IMR-90 (cell line): ENCODE measurements at regions of chr6 and their contacts with region 1.

Region 1: DNA sequence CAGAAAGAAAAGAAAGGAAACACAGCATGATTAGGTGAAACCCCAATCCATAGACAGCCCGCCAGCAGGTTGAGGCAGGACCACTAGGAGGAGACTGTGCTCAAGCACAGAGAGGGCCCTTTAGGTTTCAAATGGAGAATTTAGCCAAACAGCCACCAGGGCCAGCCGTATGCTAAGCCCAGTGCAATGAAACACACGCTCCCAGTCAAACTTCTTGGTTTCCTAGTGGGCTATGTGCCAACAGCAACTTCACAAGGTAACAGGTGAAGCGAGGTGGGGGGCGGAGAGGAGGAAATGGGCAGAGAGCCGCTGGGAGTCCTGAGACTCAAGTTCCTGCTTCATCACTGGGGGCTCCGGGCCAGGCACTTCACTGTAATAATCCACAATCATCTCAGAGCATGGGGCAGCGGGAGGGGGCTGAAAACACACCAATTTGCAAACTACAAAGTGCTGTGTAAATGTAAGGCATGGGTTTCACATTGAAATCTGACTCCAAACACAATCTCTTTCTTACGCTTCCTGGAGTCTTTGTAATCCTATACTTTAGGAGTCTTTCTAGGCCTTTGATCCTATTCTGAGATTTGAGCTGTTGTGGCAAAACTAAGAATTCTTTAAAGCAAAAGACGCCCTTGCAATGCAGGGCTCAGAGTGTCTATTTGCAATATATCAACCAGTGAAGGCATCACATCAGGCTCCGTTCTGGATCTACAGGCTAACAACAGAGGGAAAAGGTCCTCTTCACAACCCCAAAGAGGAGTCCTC is 117.3 kb downstream of the OPRM1 start:
- DNase-seq: peak; percentile 45
- ATAC-seq: peak; percentile 78
- H3K4me3 ChIP-seq: no peak overlapping the region
- H3K27ac ChIP-seq: no peak overlapping the region
- H3K4me1 ChIP-seq: peaks cover 3% of the 10 kb centered on the region; the same call in 1 of the 2 replicates
- H3K27me3 ChIP-seq: no peaks in the 10 kb centered on the region; the same call in 1 of the 2 replicates
- CTCF ChIP-seq: peak; percentile 73
- POLR2A ChIP-seq: no peak
- RAD21 ChIP-seq: peak; percentile 76

Region 2: DNA sequence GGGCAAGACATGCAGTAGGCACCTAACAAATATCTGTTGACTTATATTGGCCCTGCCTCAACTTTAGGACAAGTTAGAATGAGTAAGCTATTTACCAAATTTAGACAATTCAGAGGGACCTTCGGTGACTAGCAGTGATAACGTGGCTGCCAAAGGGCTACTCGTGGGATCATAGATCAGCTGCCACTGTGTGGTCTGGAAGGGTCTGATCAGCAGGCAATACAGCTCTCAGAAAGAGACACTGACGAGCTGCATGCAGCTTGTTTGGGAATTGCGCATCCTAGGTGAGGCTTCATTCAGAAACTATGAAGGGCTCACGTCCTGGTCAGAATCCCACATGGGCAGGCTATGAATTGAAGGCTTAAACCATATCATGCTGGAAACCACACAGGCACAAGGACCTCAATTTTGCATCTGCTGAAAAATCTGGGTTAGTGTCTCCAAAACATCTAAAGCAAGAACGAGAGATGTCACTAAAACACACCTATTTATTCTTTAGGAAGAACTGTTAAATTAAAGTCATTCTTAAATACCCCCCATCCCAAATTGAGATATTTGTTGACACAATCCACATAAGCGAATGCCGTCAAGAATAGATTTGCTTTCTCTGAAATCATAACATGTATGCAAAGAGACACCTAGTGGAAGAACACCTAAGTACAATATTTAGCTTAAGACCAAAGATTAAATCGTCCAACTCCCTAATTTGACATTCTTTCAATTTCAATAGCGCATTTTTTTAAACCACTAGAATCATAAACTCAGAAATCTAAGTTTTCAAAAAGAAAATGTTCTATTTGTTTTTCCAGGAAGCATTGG is 120.7 kb after region 1 on chr6:
- CTCF ChIA-PET with region 1: interaction called, 12 read pairs
- POLR2A ChIA-PET with region 1: no interaction called
- dilution Hi-C with region 1: no loop called
- in situ Hi-C with region 1: no loop called
- intact Hi-C with region 1: loop called (anchors 1 kb)
- DNase-seq: peak; percentile 50
- ATAC-seq: peak; percentile 85
- H3K4me3 ChIP-seq: no peak overlapping the region
- H3K27ac ChIP-seq: no peak overlapping the region
- H3K4me1 ChIP-seq: peaks cover 3% of the 10 kb centered on the region
- H3K27me3 ChIP-seq: no peaks in the 10 kb centered on the region
- CTCF ChIP-seq: peak; percentile 55
- POLR2A ChIP-seq: no peak
- RAD21 ChIP-seq: peak; percentile 54

Region 3: DNA sequence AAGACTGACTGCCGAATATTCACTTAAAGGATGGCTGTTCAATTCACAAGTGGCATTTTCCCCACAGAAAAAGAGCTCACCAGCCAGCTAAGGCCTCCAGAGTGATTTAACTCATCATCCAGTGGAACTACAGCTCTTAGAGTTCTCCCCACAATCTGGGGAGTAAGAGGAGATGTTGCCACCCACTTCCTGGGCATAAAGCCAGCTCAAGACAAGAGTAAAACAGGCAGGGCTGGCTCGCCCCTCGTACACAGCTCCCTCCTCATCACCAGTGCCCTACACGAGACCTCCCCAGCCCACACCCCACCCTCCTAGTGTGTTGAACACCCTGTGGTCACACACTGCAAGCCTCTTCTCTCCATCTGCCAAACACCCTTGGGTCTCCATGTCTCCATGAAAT is 247.5 kb after region 1 on chr6:
- CTCF ChIA-PET with region 1: interaction called, 4 read pairs
- POLR2A ChIA-PET with region 1: no interaction called
- dilution Hi-C with region 1: no loop called
- in situ Hi-C with region 1: no loop called
- intact Hi-C with region 1: loop called (anchors 1 kb)
- DNase-seq: peak; percentile 82
- ATAC-seq: peak; percentile 65
- H3K4me3 ChIP-seq: no peak overlapping the region
- H3K27ac ChIP-seq: peak overlapping the region; percentile 88
- H3K4me1 ChIP-seq: peaks cover 22% of the 10 kb centered on the region
- H3K27me3 ChIP-seq: no peaks in the 10 kb centered on the region
- CTCF ChIP-seq: no peak
- POLR2A ChIP-seq: no peak
- RAD21 ChIP-seq: no peak

Region 4: DNA sequence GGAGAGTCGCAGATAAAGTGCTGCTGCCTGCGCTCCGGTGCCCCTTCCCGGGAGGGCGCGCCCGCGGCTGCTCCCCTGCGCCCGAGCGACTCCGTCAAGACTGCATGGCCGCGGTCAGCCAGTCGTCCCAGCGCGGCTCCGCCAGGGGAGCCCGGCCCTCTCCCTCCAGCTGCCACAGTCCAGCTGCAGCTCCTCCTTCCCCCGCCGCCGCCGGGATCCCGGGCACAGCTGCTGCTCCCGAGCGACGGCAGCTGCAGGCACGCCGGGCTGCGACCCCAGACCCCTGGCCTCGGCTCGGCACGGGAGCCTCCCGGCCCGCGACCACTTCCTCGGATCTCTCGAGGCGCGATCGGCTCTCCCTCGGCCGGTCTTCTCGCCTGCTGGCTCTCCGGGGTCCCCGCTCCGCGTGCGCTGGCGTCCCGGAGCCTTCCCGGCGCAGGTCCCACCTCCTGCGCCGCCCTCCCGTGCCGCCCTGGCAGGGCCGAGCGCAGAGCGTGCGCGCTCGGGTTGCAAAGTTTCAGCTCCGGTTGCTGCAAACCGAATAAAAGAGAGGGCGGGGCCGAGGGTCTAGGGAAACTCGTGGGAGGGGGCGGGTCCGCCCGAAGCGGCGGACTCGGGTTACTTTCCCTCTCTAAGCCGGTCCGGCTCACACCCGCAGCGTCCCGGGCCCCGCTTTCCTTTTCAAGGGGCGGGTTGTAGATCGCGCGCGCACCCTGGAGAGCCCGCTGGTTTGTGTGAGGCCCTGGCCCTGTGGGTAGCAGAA is 354.0 kb after region 1 on chr6 and contains the start of gene CNKSR3:
- CTCF ChIA-PET with region 1: no interaction called
- POLR2A ChIA-PET with region 1: no interaction called
- dilution Hi-C with region 1: no loop called
- in situ Hi-C with region 1: no loop called
- intact Hi-C with region 1: loop called (anchors 2 kb)
- DNase-seq: peak; percentile 95
- ATAC-seq: peak; percentile 89
- H3K4me3 ChIP-seq: peak within 1 kb of the TSS; percentile 88
- H3K27ac ChIP-seq: peak within 1 kb of the TSS; percentile 89
- H3K4me1 ChIP-seq: peaks cover 5% of the 10 kb centered on the region
- H3K27me3 ChIP-seq: no peaks in the 10 kb centered on the region
- CTCF ChIP-seq: peak; percentile 13; the same call in 1 of the 2 replicates
- POLR2A ChIP-seq: peak; percentile 58
- RAD21 ChIP-seq: 0 out of 2 replicates have a peak, but pooled peaks have one; percentile 27
- total RNA-seq, gene CNKSR3: 15.0 and 15.8 TPM in 2 replicates

Region 5: DNA sequence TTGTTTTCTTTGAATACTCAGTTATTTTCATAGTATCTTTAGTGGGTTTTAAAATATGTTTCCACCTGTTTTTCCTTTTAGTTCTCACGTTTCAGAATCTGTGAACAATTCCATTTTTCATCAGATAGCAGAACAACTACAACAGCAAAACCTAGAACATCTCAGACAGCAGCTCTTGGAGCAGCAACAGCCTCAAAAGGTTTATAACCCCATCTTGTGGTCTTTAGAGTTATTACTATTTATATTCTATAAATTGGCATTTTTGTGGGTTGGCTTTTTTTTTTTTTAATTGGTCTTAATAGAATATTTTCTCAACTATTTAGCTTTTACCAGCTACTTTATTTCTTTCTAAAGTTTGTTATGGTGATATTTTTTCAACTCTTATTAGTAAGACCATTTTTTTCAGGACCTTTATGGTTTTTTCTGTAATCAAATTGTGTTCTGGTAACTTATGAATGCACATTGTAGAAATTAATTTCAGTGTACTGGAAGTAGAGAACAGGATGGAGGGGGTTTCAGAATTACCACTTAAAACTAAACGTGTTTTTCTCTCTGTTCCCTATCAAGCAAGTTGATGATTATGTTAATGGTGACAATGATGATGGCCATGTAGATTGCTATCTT is 649.1 kb after region 1 on chr6:
- CTCF ChIA-PET with region 1: no interaction called
- POLR2A ChIA-PET with region 1: no interaction called
- dilution Hi-C with region 1: no loop called
- in situ Hi-C with region 1: loop called (anchors 10 kb)
- intact Hi-C with region 1: loop called (anchors 5 kb)
- DNase-seq: peak; percentile 70
- ATAC-seq: peak; percentile 80
- H3K4me3 ChIP-seq: no peak overlapping the region
- H3K27ac ChIP-seq: no peak overlapping the region
- H3K4me1 ChIP-seq: no peaks in the 10 kb centered on the region
- H3K27me3 ChIP-seq: no peaks in the 10 kb centered on the region
- CTCF ChIP-seq: peak; percentile 69
- POLR2A ChIP-seq: no peak
- RAD21 ChIP-seq: peak; percentile 73

Region 6: DNA sequence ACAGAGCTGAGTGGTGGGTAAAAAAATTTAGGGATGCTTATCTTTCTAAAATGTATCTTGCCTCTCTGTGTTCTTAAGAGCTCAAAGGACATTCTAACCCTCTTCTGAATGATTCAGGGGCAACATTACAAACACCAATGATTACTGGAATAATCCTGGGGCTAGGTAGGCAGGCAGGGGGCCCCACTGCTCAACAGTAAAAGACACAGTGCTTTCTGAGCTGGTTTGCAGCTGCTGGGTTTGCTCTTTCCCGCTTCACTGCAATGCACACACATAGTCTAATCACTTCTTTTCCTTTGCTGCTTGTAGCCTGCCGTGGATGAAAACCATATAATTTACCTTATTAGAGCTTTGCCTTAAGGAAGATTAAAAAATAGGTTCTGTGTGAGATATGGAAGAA is 1131.4 kb after region 1 on chr6:
- CTCF ChIA-PET with region 1: no interaction called
- POLR2A ChIA-PET with region 1: no interaction called
- dilution Hi-C with region 1: no loop called
- in situ Hi-C with region 1: no loop called
- intact Hi-C with region 1: no loop called
- DNase-seq: no peak
- ATAC-seq: no peak
- H3K4me3 ChIP-seq: no peak overlapping the region
- H3K27ac ChIP-seq: no peak overlapping the region
- H3K4me1 ChIP-seq: no peaks in the 10 kb centered on the region
- H3K27me3 ChIP-seq: no peaks in the 10 kb centered on the region
- CTCF ChIP-seq: no peak
- POLR2A ChIP-seq: no peak
- RAD21 ChIP-seq: no peak